Right ventricle myocardium superior (tissue), 1 donor: ENCODE measurements at regions of chr1 and their contacts with region 1.

Region 1: DNA sequence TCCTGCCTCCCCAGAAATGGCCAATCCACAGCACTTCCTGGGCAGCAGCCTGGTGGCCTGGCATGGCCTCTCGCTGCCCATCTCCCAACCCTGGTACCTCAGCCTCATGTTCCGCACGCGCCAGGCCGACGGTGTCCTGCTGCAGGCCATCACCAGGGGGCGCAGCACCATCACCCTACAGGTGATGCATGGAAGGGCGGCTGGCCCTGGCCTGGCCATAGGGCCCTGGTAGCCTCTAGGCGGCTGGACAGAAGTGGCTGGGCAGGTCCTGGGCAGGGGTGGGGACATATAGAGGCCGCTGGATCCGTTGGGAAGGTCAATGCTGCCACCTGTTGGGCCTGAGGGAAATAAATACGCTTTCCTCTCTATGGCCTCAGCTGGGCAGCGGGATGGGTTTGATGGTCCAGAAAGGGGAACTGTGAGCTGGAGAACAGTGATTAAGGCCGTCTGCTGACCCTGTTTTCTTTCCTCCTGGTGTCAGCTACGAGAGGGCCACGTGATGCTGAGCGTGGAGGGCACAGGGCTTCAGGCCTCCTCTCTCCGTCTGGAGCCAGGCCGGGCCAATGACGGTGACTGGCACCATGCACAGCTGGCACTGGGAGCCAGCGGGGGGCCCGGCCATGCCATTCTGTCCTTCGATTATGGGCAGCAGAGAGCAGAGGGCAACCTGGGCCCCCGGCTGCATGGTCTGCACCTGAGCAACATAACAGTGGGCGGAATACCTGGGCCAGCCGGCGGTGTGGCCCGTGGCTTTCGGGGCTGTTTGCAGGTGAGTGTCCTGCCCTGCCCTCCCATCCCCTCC is 14.5 kb downstream of the CELSR2 start:
- DNase-seq: peak; percentile 90
- ATAC-seq: peak; percentile 88

Region 2: DNA sequence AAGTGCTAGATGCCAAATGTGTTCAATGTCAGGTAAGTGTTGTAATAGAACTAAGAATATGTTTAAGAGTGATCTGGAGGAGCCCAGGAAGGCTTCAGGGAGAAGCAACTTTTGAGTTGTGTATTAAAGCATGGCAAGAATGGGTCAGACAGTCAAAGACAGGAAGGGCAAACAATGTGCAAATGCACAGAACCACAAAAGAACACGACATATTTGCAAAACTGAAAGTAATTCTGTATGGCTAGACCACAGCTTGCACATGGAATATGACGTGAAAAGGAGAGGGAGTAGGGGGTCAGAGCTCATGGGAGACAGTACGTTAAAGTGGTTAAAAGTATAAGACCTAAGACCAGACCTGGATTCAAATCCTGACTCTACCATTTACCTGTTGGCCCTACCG is 141.0 kb after region 1 on chr1:
- intact Hi-C with region 1: loop called (anchors 5 kb)
- DNase-seq: no peak
- ATAC-seq: no peak